Posterior vena cava (tissue), 2 donors: ENCODE measurements at regions of chr2 and their contacts with region 1.

Region 1: DNA sequence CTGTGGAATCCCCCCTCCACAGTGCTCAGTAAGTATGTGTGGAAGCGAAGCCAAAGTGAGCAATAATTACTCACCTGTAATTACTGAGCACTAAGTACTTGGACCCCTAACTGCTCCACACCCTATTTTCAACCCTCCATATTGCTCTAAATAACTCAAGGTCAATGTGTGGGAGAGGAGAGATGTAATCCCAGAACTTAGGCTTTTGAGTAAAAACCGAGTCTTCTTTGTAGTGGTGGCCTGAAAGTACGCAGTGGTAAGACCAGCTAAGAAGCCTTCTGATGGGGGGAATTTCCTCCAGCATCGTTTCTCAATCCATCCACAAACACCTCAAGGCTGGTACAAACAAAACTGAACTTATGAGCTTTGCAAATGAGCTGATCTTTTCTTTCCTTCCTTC is 551.6 kb downstream of the ZEB2 start:
- DNase-seq: no peak

Region 2: DNA sequence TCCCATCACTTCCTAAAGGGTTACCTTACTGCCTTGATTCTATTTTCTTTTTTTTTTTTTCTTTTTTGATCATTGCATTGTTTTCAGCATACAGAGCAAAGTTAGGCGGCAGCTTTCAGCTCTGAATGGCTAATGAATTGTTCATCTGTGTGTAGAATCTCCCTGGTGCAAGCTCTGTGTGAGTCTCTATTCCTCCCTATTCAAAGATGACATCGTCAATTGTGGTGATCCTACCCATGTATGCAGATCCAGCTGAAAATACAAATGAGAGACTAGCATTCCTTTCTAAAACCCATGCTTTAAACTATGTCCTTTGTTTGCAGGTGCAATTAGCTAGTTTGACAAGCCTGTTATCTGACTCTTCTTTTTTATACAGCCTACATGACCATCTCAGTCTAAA is 300.1 kb before region 1 on chr2:
- intact Hi-C with region 1: loop called in 1 of 2 experiments (anchors 5 kb)
- DNase-seq: no peak

Region 3: GRCh38 chr2:143988082-143988481 is 19.7 kb after region 1 on chr2:
- intact Hi-C with region 1: loop called in 1 of 2 experiments (anchors 2 kb)
- DNase-seq: no peak